ENCODE measurements at regions of chr6 and their contacts with region 1.

Region 1: GRCh38 chr6:28838634-28839442 is 84.9 kb downstream of the TRIM27 start:
- DNase-seq: peak; percentile 80
- H3K4me3 Mint-ChIP-seq: peak overlapping the region; percentile 92
- H3K27ac Mint-ChIP-seq: peak overlapping the region; percentile 81
- H3K4me1 Mint-ChIP-seq: peaks cover 27% of the 10 kb centered on the region
- H3K27me3 Mint-ChIP-seq: peaks cover 47% of the 10 kb centered on the region

Region 2: DNA sequence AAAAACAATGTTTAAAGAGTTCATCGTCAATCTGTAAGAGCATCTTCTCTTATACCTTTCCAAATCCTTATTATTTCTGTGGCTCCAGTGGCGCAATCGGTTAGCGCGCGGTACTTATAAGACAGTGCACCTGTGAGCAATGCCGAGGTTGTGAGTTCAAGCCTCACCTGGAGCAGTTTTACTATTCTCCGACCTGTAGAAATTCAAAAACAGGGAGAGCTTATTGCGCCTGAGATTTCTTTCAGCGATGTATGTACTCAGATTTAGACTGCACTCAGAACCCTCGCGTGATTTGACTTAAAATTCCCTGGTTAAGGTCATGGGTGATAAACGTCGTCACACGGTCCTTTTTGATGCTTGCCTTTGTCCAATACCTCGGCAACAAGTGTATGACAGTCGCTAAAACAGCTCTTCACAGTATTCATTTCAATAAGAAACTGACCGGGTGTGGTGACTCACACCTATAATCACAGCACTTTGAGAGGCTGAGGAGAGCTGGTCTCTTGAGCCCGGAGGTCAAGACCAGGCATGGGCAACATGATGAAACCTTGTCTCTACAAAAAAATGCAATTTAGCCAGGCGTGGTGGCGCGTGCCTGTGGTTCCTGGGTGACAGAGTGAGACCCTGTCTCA is 301.2 kb before region 1 on chr6:
- CTCF ChIA-PET with region 1: no interaction called
- POLR2A ChIA-PET with region 1: no interaction called
- DNase-seq: no peak
- H3K4me3 Mint-ChIP-seq: peak overlapping the region; percentile 53
- H3K27ac Mint-ChIP-seq: no peak overlapping the region
- H3K4me1 Mint-ChIP-seq: peaks cover 19% of the 10 kb centered on the region
- H3K27me3 Mint-ChIP-seq: peaks cover 60% of the 10 kb centered on the region

Region 3: DNA sequence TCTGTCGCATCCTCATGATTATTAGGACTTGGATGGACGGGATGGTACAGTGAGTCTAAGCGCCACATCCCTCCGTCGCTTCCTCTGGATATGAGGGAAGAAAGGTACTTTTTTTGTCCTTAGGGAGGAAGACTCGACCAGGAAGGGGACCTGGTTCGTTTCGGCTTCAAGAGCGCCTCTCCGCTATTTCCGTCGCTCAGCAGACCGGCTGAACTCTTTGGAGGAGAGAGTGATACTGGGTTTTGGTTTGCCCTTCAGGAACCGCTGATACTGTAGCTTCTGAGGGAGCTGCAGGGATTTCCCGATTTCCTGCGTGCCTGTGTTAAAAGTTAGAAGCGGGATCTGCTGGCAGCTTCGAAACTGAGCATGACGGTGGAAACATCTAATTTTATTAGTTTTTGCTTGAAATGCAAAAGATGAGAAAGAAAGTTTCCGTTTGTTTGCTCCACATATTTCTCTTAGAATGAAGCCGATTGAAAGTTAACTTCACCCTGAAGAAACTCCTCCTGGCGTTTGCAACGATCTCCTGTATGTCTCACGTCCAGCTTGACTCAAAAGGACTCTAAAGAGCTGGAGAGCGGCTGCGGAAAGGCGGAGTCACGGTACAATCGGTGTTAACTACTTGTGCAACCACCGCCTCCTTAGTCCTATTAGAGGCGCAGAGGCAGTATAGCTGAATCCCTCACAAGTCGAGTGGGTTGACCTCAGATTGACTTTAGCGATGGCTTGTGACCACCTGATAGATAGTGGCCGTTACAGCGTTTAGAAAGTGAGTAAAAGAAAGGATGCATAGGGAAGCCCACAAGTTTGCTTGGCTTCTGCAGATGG is 44.4 kb before region 1 on chr6:
- CTCF ChIA-PET with region 1: no interaction called
- POLR2A ChIA-PET with region 1: no interaction called
- DNase-seq: no peak
- H3K4me3 Mint-ChIP-seq: peak overlapping the region; percentile 61
- H3K27ac Mint-ChIP-seq: peak overlapping the region; percentile 26
- H3K4me1 Mint-ChIP-seq: peaks cover 26% of the 10 kb centered on the region
- H3K27me3 Mint-ChIP-seq: peaks cover 79% of the 10 kb centered on the region

Region 4: GRCh38 chr6:28807682-28808280 is 31.1 kb before region 1 on chr6:
- CTCF ChIA-PET with region 1: no interaction called
- POLR2A ChIA-PET with region 1: no interaction called
- DNase-seq: no peak
- H3K4me3 Mint-ChIP-seq: no peak overlapping the region
- H3K27ac Mint-ChIP-seq: no peak overlapping the region
- H3K4me1 Mint-ChIP-seq: peaks cover 16% of the 10 kb centered on the region
- H3K27me3 Mint-ChIP-seq: peaks cover 83% of the 10 kb centered on the region

Region 5: GRCh38 chr6:28824793-28825731 is 13.8 kb before region 1 on chr6:
- CTCF ChIA-PET with region 1: interaction called, 12 read pairs
- POLR2A ChIA-PET with region 1: no interaction called
- DNase-seq: no peak
- H3K4me3 Mint-ChIP-seq: no peak overlapping the region
- H3K27ac Mint-ChIP-seq: no peak overlapping the region
- H3K4me1 Mint-ChIP-seq: peaks cover 12% of the 10 kb centered on the region
- H3K27me3 Mint-ChIP-seq: peaks cover 69% of the 10 kb centered on the region